ENCODE measurements at regions of chr7 and their contacts with region 1.

Region 1: GRCh38 chr7:105399043-105399725 is 10.5 kb upstream of the SRPK2 start:
- DNase-seq: no peak
- H3K4me3 ChIP-seq: no peak overlapping the region
- H3K27me3 ChIP-seq: no peaks in the 10 kb centered on the region
- CTCF ChIP-seq: peak; percentile 43

Region 2: GRCh38 chr7:105429746-105430612 is 30.8 kb after region 1 on chr7:
- CTCF ChIA-PET with region 1: interaction called, 13 read pairs
- POLR2A ChIA-PET with region 1: no interaction called
- DNase-seq: no peak
- H3K4me3 ChIP-seq: no peak overlapping the region
- H3K27me3 ChIP-seq: no peaks in the 10 kb centered on the region
- CTCF ChIP-seq: peak; percentile 47

Region 3: GRCh38 chr7:105487579-105488571 is 88.7 kb after region 1 on chr7:
- CTCF ChIA-PET with region 1: interaction called, 26 read pairs
- POLR2A ChIA-PET with region 1: no interaction called
- DNase-seq: peak; percentile 69
- H3K4me3 ChIP-seq: no peak overlapping the region
- H3K27me3 ChIP-seq: no peaks in the 10 kb centered on the region
- CTCF ChIP-seq: peak; percentile 51

Region 4: GRCh38 chr7:105493923-105494315 is 94.7 kb after region 1 on chr7:
- CTCF ChIA-PET with region 1: interaction called, 26 read pairs
- POLR2A ChIA-PET with region 1: no interaction called
- DNase-seq: peak; percentile 43
- H3K4me3 ChIP-seq: no peak overlapping the region
- H3K27me3 ChIP-seq: no peaks in the 10 kb centered on the region
- CTCF ChIP-seq: no peak

Measured in BJ (cell line).